Activated B cell treated with CpG ODN at 0.5 μM for 24 hours (primary cell): ENCODE measurements at regions of chr1 and their contacts with region 1.

Region 1: GRCh38 chr1:157652859-157653493 is 47.6 kb downstream of the FCRL3 start:
- DNase-seq: no peak
- ATAC-seq: peak; percentile 90
- H3K4me3 Mint-ChIP-seq: peak overlapping the region; percentile 69
- H3K27ac Mint-ChIP-seq: peak overlapping the region; percentile 82
- H3K4me1 Mint-ChIP-seq: peaks cover 44% of the 10 kb centered on the region
- H3K27me3 Mint-ChIP-seq: no peaks in the 10 kb centered on the region
- CTCF ChIP-seq: no peak

Region 2: GRCh38 chr1:157419845-157420542 is 233.0 kb before region 1 on chr1:
- CTCF ChIA-PET with region 1: no interaction called
- POLR2A ChIA-PET with region 1: no interaction called
- intact Hi-C with region 1: no loop called
- DNase-seq: no peak
- ATAC-seq: no peak
- H3K4me3 Mint-ChIP-seq: no peak overlapping the region
- H3K27ac Mint-ChIP-seq: no peak overlapping the region
- H3K4me1 Mint-ChIP-seq: no peaks in the 10 kb centered on the region
- H3K27me3 Mint-ChIP-seq: peaks cover 19% of the 10 kb centered on the region
- CTCF ChIP-seq: no peak

Region 3: GRCh38 chr1:157505481-157506272 is 147.3 kb before region 1 on chr1:
- CTCF ChIA-PET with region 1: no interaction called
- POLR2A ChIA-PET with region 1: no interaction called
- intact Hi-C with region 1: no loop called
- DNase-seq: peak; percentile 33
- ATAC-seq: peak; percentile 98
- H3K4me3 Mint-ChIP-seq: peak overlapping the region; percentile 69
- H3K27ac Mint-ChIP-seq: peak overlapping the region; percentile 50
- H3K4me1 Mint-ChIP-seq: peaks cover 37% of the 10 kb centered on the region
- H3K27me3 Mint-ChIP-seq: no peaks in the 10 kb centered on the region
- CTCF ChIP-seq: no peak

Region 4: GRCh38 chr1:157595356-157595755 is 57.6 kb before region 1 on chr1:
- CTCF ChIA-PET with region 1: no interaction called
- POLR2A ChIA-PET with region 1: no interaction called
- intact Hi-C with region 1: loop called (anchors 1 kb)
- DNase-seq: no peak
- ATAC-seq: peak; percentile 53
- H3K4me3 Mint-ChIP-seq: peak overlapping the region; percentile 62
- H3K27ac Mint-ChIP-seq: peak overlapping the region; percentile 30
- H3K4me1 Mint-ChIP-seq: peaks cover 71% of the 10 kb centered on the region
- H3K27me3 Mint-ChIP-seq: no peaks in the 10 kb centered on the region
- CTCF ChIP-seq: no peak

Region 5: DNA sequence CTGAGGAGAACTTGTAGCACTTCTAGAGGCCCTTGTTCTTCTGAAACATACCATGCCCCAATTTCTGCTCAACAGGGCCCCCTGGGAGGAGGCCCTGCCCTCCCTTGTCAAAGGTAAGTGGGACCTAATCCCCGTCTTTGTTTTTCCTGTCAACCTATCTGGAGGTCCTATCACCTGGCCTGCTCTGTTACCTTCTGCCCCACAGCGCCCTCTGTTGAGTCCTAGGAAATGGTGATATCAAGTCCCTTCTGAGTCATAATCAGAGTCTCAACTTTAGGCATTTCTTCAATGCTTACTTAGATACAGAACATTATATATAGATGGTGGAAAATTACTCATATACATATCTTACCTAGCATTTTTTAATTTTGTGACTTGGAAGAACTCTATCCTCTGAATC is 26.9 kb before region 1 on chr1:
- CTCF ChIA-PET with region 1: interaction called, 4 read pairs
- POLR2A ChIA-PET with region 1: no interaction called
- intact Hi-C with region 1: loop called (anchors 2 kb)
- DNase-seq: peak; percentile 36
- ATAC-seq: peak; percentile 78
- H3K4me3 Mint-ChIP-seq: no peak overlapping the region
- H3K27ac Mint-ChIP-seq: no peak overlapping the region
- H3K4me1 Mint-ChIP-seq: peaks cover 16% of the 10 kb centered on the region
- H3K27me3 Mint-ChIP-seq: no peaks in the 10 kb centered on the region
- CTCF ChIP-seq: peak; percentile 47

Region 6: DNA sequence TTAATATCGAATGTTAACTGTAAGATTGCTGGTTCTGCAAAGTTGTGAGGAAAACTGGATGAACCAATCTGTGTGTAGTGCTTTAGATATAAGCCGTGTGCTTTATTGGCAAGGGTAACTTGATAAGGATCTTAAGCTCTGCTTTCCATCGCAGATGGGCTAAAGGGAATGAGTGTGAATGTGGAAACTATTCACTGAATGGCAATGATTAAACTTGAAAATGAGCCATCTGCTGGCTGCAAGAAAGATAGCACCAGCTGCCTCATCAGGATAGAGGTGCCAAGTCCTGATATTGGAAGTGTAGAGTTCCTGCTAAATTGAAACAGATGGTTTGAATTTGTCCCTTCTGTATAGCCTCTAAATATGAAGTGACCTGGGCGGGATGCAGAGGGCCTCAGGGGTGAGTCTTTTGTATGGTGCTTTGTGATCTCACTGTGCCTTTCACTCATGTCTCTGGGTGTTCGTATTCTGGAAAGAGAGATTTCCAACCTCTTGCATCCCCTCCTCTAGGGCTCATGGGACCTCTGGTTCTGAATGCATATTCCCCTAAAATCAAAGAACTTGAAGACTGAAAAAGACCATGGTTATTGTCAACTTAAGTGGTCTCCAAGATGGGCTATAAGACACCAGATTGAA is 38.4 kb after region 1 on chr1:
- CTCF ChIA-PET with region 1: interaction called, 8 read pairs
- POLR2A ChIA-PET with region 1: interaction called, 3 read pairs
- intact Hi-C with region 1: loop called (anchors 5 kb)
- DNase-seq: no peak
- ATAC-seq: peak; percentile 62
- H3K4me3 Mint-ChIP-seq: no peak overlapping the region
- H3K27ac Mint-ChIP-seq: peak overlapping the region; percentile 69
- H3K4me1 Mint-ChIP-seq: peaks cover 86% of the 10 kb centered on the region
- H3K27me3 Mint-ChIP-seq: no peaks in the 10 kb centered on the region
- CTCF ChIP-seq: no peak

Region 7: GRCh38 chr1:157725221-157725577 is 72.2 kb after region 1 on chr1:
- CTCF ChIA-PET with region 1: no interaction called
- POLR2A ChIA-PET with region 1: interaction called, 3 read pairs
- intact Hi-C with region 1: loop called (anchors 1 kb)
- DNase-seq: no peak
- ATAC-seq: peak; percentile 17
- H3K4me3 Mint-ChIP-seq: peak overlapping the region; percentile 16
- H3K27ac Mint-ChIP-seq: peak overlapping the region; percentile 97
- H3K4me1 Mint-ChIP-seq: peaks cover 71% of the 10 kb centered on the region
- H3K27me3 Mint-ChIP-seq: no peaks in the 10 kb centered on the region
- CTCF ChIP-seq: no peak

Region 8: DNA sequence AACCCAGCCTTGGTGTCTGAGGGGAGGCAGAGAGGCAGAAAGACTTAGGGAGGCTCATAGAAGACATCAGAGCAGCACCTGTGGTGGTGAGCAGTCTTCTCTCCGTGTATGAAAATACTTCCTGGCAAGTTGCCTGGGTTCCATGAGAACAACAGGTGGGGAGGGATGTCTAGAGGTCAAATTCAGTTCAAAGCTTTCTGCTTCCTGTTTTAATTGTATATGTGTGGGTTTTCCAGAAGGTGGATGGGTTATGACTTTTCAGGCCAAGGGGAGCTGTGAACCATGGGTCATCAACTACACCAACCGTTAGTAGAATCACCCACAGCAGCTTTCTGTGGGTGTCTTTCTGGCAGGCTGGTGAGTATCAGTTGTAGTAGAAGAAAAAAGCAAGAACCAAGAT is 128.1 kb after region 1 on chr1:
- CTCF ChIA-PET with region 1: no interaction called
- POLR2A ChIA-PET with region 1: no interaction called
- intact Hi-C with region 1: no loop called
- DNase-seq: no peak
- ATAC-seq: peak; percentile 22
- H3K4me3 Mint-ChIP-seq: peak overlapping the region; percentile 48
- H3K27ac Mint-ChIP-seq: peak overlapping the region; percentile 77
- H3K4me1 Mint-ChIP-seq: peaks cover 99% of the 10 kb centered on the region
- H3K27me3 Mint-ChIP-seq: no peaks in the 10 kb centered on the region
- CTCF ChIP-seq: no peak